ENCODE measurements at regions of chr16 and their contacts with region 1.

Region 1: DNA sequence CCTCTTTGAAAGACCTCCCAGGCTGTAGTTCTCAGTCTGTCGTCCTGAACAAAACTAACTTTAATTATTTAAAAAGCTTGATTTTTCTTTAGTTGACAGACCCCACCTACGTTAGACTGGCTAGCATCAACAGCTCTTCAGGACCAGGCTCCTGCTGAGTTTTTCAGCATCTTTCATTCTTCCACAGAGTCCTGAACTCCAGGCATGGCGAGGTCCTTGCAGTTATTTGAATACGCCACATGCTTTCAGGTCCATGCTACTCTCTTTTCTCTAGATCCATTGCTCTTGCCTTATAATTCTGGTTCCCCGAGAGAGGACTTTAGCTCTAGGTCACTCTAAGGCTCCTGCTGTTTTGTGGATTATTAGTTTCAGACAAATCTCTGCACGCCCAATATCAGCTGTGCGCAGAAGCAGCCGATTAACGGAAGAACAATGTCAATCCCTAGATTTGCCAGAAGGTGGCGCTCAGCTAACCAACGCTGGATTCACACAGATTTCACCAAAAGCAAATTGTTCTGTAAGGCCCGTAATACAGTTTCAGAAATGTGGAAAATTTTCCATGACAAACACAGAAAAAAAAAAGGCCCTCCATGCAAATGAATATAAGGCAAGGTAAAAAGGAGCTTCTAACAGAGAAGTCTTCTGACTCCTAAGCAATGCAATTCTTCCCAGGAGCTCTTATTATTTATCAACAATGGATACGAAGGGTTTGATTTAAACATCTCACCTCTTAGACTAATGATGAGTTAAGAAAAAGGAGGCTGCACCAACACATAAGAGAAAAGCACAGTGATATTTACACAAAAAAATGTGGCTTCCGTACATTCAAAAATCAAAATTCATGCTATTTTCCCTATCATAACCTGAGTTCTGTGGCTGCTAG is 33.5 kb upstream of the BCO1 start:
- DNase-seq: no peak

Region 2: GRCh38 chr16:81283044-81283443 is 78.0 kb after region 1 on chr16:
- intact Hi-C with region 1: no loop called
- DNase-seq: no peak

Region 3: GRCh38 chr16:81324808-81325207 is 119.8 kb after region 1 on chr16:
- intact Hi-C with region 1: loop called (anchors 10 kb)
- DNase-seq: no peak

Region 4: DNA sequence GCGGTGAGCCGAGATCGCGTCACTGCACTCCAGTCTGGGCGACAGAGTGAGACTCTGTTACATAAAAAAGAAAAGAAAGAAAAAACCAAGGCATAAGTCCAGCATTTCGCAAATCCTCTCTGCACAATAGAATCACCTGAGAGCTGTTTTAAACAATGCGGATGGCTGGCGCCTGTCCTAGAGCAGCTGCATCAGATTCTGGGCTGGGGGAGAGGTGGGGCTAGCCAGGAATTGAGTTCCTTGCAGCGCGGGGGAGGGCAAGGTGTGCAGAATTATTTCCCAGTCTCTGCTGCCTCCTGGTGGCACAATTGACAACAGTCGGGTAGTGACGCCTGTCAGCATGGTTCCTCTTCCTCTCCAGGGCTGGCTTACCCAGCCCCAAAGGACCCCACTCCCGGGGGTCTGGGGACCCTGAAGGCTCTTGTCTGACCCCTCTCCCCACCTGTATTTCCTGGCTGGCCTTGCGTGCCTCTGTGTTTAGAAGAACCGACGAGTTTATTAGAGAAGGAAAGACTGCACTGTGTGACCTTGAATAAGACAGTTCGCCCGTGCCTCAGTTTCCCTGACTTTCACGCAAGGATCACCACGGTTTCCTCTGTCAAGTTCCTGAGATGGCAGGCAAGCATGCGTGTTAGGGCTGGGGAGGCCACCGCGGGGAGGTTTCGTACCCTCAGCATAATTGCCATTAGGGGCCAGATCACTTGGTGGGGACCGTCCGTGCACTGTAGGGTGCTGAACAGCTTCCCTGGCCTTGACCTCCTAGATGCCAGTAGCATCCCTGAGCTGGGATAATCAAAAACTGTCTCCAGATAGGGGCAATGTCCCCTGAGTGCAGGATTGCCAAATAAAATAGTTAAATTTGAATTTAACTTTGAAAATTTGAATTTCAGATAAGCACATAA is 533.1 kb after region 1 on chr16:
- intact Hi-C with region 1: loop called (anchors 10 kb)
- DNase-seq: peak; percentile 94